Activated CD4-positive, alpha-beta memory T cell treated with anti-CD3 and anti-CD28 coated beads for 36 hours (primary cell): ENCODE measurements at regions of chr2 and their contacts with region 1.

Region 1: DNA sequence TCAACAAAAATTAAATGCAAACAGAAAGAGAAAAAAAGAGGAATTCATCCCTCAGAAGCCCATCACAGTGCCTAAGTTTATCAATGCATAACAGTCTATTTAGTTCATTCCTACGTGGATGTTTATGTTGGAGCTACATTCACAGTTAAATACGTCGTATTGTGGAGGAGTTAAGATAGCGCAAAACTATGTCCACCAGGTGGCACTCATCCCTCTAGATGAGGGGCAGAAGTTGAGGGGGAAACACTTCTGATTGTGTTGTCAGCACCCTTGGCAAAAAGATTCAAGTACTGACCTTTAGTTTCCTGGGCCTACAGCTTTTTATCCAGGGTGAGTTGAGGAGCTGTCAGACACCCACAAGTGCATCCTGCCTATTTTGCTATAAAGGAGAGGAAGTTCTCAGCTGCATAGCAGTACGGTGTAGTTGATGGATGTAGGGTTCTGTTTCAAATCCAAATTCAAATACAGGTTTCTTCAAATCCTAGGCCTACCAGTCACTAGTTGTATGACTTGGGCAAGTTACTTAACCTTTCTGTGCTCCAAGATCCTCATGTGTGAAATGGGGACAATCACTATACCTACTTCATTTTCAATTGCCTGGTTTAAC is 26.8 kb upstream of the MYO1B start:
- DNase-seq: peak; percentile 47
- H3K4me3 Mint-ChIP-seq: no peak overlapping the region
- H3K27ac Mint-ChIP-seq: no peak overlapping the region
- H3K4me1 Mint-ChIP-seq: peaks cover 22% of the 10 kb centered on the region
- H3K27me3 Mint-ChIP-seq: no peaks in the 10 kb centered on the region

Region 2: GRCh38 chr2:191171708-191172355 is 46.6 kb before region 1 on chr2:
- CTCF ChIA-PET with region 1: interaction called, 11 read pairs
- POLR2A ChIA-PET with region 1: no interaction called
- intact Hi-C with region 1: loop called (anchors 1 kb)
- DNase-seq: no peak
- H3K4me3 Mint-ChIP-seq: no peak overlapping the region
- H3K27ac Mint-ChIP-seq: peak overlapping the region; percentile 16
- H3K4me1 Mint-ChIP-seq: peaks cover 58% of the 10 kb centered on the region
- H3K27me3 Mint-ChIP-seq: no peaks in the 10 kb centered on the region

Region 3: DNA sequence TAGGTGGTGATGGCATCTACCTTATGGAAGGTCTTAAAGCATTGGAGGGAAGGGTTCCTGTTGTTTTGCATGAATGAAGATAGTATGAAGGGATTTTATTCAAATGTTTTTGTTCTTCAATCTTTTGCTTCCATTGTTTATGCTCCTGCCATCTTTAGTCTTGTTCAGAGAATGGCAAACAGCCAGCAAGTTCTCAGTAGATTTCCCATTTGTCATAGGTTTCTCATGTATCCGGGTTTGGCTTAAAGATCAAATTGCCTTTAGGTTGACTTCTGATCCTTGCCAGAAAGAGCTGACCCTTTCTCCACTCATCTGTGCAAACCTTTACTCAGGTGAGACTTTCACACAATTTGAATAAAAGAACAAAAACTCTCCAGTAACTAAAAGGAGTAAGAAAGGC is 23.4 kb before region 1 on chr2:
- CTCF ChIA-PET with region 1: interaction called, 26 read pairs
- POLR2A ChIA-PET with region 1: interaction called, 4 read pairs
- intact Hi-C with region 1: loop called (anchors 1 kb)
- DNase-seq: no peak
- H3K4me3 Mint-ChIP-seq: no peak overlapping the region
- H3K27ac Mint-ChIP-seq: peak overlapping the region; percentile 97
- H3K4me1 Mint-ChIP-seq: peaks cover 52% of the 10 kb centered on the region
- H3K27me3 Mint-ChIP-seq: no peaks in the 10 kb centered on the region

Region 4: GRCh38 chr2:191202881-191203397 is 15.5 kb before region 1 on chr2:
- CTCF ChIA-PET with region 1: interaction called, 14 read pairs
- POLR2A ChIA-PET with region 1: interaction called, 3 read pairs
- intact Hi-C with region 1: loop called (anchors 2 kb)
- DNase-seq: peak; percentile 42
- H3K4me3 Mint-ChIP-seq: no peak overlapping the region
- H3K27ac Mint-ChIP-seq: peak overlapping the region; percentile 70
- H3K4me1 Mint-ChIP-seq: peaks cover 46% of the 10 kb centered on the region
- H3K27me3 Mint-ChIP-seq: no peaks in the 10 kb centered on the region